Panc1 (cell line): ENCODE measurements at regions of chr11 and their contacts with region 1.

Region 1: DNA sequence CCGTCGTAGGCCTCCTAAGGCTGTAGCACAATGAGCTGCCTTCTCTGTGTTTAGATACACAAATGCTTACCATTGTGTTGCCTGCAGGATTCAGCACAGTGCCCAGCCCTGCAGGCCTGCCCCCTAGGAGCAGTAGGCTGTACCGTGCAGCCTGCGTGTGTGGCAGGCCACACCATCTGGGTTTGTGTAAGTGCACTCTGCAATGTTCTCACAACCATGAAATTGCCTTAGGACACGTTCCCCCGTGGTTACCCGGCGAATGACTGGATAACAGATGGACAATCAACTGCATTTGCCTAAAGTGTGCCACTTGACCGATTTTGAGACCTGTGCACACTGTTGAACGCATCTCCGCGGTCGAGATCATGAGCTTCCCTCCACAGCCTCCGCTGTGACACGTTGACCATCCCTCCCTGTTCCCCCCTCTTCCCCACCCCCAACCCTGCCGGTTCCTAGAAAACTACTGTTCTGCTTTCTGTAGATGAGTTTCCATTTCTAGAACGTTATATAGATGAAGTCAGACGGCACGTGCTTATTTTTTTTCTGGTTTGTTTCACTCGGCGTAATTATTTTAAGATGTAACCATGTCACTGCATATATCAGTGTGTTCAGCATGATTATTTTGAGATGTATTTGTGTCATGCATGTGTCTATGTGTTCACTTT is 22.2 kb upstream of the CTSD start:
- DNase-seq: no peak
- ATAC-seq: no peak
- H3K4me3 ChIP-seq: no peak overlapping the region
- H3K27ac ChIP-seq: peak overlapping the region; percentile 2; the same call in 1 of the 2 replicates
- H3K4me1 ChIP-seq: peaks cover 37% of the 10 kb centered on the region
- H3K27me3 ChIP-seq: no peaks in the 10 kb centered on the region
- CTCF ChIP-seq: no peak

Region 2: GRCh38 chr11:1763796-1764661 is 21.9 kb before region 1 on chr11 and contains the start of gene CTSD:
- CTCF ChIA-PET with region 1: no interaction called
- POLR2A ChIA-PET with region 1: interaction called, 10 read pairs
- in situ Hi-C with region 1: no loop called
- intact Hi-C with region 1: no loop called
- DNase-seq: no peak
- ATAC-seq: peak; percentile 73
- H3K4me3 ChIP-seq: peak within 1 kb of the TSS; percentile 88 to 90
- H3K27ac ChIP-seq: peak within 1 kb of the TSS; percentile 94
- H3K4me1 ChIP-seq: peaks cover 69% of the 10 kb centered on the region
- H3K27me3 ChIP-seq: no peaks in the 10 kb centered on the region
- CTCF ChIP-seq: no peak; the same call in 1 of the 2 replicates
- total RNA-seq, gene CTSD: 1,813 TPM

Region 3: GRCh38 chr11:1882519-1883238 is 96.8 kb after region 1 on chr11:
- CTCF ChIA-PET with region 1: no interaction called
- POLR2A ChIA-PET with region 1: no interaction called
- in situ Hi-C with region 1: no loop called
- intact Hi-C with region 1: no loop called
- DNase-seq: peak; percentile 22
- ATAC-seq: peak; percentile 93
- H3K4me3 ChIP-seq: no peak overlapping the region
- H3K27ac ChIP-seq: no peak overlapping the region
- H3K4me1 ChIP-seq: peaks cover 2% of the 10 kb centered on the region; the same call in 1 of the 2 replicates
- H3K27me3 ChIP-seq: no peaks in the 10 kb centered on the region
- CTCF ChIP-seq: peak; percentile 100

Region 4: GRCh38 chr11:1943977-1944376 is 158.1 kb after region 1 on chr11:
- CTCF ChIA-PET with region 1: no interaction called
- POLR2A ChIA-PET with region 1: no interaction called
- in situ Hi-C with region 1: no loop called
- intact Hi-C with region 1: no loop called
- DNase-seq: no peak
- ATAC-seq: peak; percentile 31
- H3K4me3 ChIP-seq: peak overlapping the region; percentile 5 to 28; a peak in 2 of 4 replicates
- H3K27ac ChIP-seq: peak overlapping the region; percentile 54; the same call in 1 of the 2 replicates
- H3K4me1 ChIP-seq: peaks cover 15% of the 10 kb centered on the region
- H3K27me3 ChIP-seq: no peaks in the 10 kb centered on the region
- CTCF ChIP-seq: no peak